ENCODE measurements at regions of chrX and their contacts with region 1.

Region 1: GRCh38 chrX:40735325-40736169 is at the start of gene MED14:
- DNase-seq: peak; percentile 77
- ATAC-seq: peak; percentile 80
- H3K4me3 Mint-ChIP-seq: peak within 1 kb of the TSS; percentile 89
- H3K27ac Mint-ChIP-seq: peak within 1 kb of the TSS; percentile 95
- H3K4me1 Mint-ChIP-seq: peaks cover 49% of the 10 kb centered on the region
- H3K27me3 Mint-ChIP-seq: no peaks in the 10 kb centered on the region
- CTCF ChIP-seq: no peak
- total RNA-seq, gene MED14: 52.4 and 62.6 TPM in 2 replicates

Region 2: GRCh38 chrX:40539214-40540142 is 196.1 kb before region 1 on chrX:
- CTCF ChIA-PET with region 1: no interaction called
- POLR2A ChIA-PET with region 1: no interaction called
- intact Hi-C with region 1: loop called (anchors 1 kb)
- DNase-seq: peak; percentile 19
- ATAC-seq: peak; percentile 77
- H3K4me3 Mint-ChIP-seq: peak overlapping the region; percentile 41
- H3K27ac Mint-ChIP-seq: no peak overlapping the region
- H3K4me1 Mint-ChIP-seq: peaks cover 16% of the 10 kb centered on the region
- H3K27me3 Mint-ChIP-seq: no peaks in the 10 kb centered on the region
- CTCF ChIP-seq: no peak

Region 3: GRCh38 chrX:40570346-40571093 is 165.0 kb before region 1 on chrX:
- CTCF ChIA-PET with region 1: no interaction called
- POLR2A ChIA-PET with region 1: no interaction called
- intact Hi-C with region 1: no loop called
- DNase-seq: peak; percentile 15
- ATAC-seq: peak; percentile 62
- H3K4me3 Mint-ChIP-seq: peak overlapping the region; percentile 79
- H3K27ac Mint-ChIP-seq: peak overlapping the region; percentile 77
- H3K4me1 Mint-ChIP-seq: peaks cover 19% of the 10 kb centered on the region
- H3K27me3 Mint-ChIP-seq: no peaks in the 10 kb centered on the region
- CTCF ChIP-seq: no peak

Region 4: GRCh38 chrX:40647307-40648197 is 88.0 kb before region 1 on chrX and contains the start of gene CXorf38:
- CTCF ChIA-PET with region 1: interaction called, 3 read pairs
- POLR2A ChIA-PET with region 1: interaction called, 16 read pairs
- intact Hi-C with region 1: loop called (anchors 1 kb)
- DNase-seq: peak; percentile 83
- ATAC-seq: peak; percentile 67
- H3K4me3 Mint-ChIP-seq: peak within 1 kb of the TSS; percentile 94
- H3K27ac Mint-ChIP-seq: peak within 1 kb of the TSS; percentile 93
- H3K4me1 Mint-ChIP-seq: peaks cover 39% of the 10 kb centered on the region
- H3K27me3 Mint-ChIP-seq: no peaks in the 10 kb centered on the region
- CTCF ChIP-seq: no peak
- total RNA-seq, gene CXorf38: 20.9 and 21.9 TPM in 2 replicates

Region 5: DNA sequence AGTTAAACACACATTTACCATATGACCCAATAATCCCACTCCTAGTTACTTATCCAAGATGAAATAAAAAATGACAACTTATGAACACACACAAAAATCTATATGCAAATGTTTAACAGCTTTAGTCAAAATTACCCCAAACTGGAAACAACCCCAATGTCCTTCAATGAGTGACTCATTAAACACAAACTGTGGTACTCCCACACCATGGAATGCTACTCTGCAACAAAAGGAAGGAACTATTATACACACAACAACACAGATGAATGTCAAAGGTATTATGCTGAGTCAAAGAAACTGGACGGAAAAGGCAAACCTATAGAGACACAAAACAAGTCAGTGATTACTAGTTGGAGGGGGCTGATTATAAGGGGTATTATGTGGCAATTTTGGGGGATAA is 40.7 kb before region 1 on chrX:
- CTCF ChIA-PET with region 1: no interaction called
- POLR2A ChIA-PET with region 1: no interaction called
- intact Hi-C with region 1: loop called (anchors 5 kb)
- DNase-seq: no peak
- ATAC-seq: no peak
- H3K4me3 Mint-ChIP-seq: no peak overlapping the region
- H3K27ac Mint-ChIP-seq: no peak overlapping the region
- H3K4me1 Mint-ChIP-seq: no peaks in the 10 kb centered on the region
- H3K27me3 Mint-ChIP-seq: no peaks in the 10 kb centered on the region
- CTCF ChIP-seq: no peak

Region 6: GRCh38 chrX:40792433-40792832 is 56.9 kb after region 1 on chrX:
- CTCF ChIA-PET with region 1: interaction called, 7 read pairs
- POLR2A ChIA-PET with region 1: interaction called, 5 read pairs
- intact Hi-C with region 1: loop called (anchors 1 kb)
- DNase-seq: no peak
- ATAC-seq: no peak
- H3K4me3 Mint-ChIP-seq: no peak overlapping the region
- H3K27ac Mint-ChIP-seq: no peak overlapping the region
- H3K4me1 Mint-ChIP-seq: peaks cover 1% of the 10 kb centered on the region
- H3K27me3 Mint-ChIP-seq: peaks cover 3% of the 10 kb centered on the region
- CTCF ChIP-seq: no peak

Region 7: DNA sequence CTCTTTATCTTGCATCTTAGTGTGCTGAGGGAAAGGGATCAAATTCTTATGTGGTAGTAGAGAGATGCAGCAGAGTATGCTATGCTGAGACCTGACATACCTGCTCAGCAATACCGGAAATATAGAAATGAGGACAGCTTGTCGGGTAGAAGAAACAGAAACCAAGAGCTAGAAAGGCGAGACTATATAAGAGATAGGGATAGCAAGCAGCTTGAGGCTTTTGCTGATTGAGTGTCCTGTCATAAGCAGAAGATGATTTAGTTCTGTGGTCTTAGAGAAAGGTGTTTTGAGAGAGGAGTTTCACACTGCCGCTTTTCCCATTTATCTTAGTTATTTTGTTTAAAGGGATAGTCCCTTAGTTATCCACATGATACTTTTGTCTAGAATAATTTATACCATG is 381.4 kb after region 1 on chrX:
- CTCF ChIA-PET with region 1: no interaction called
- POLR2A ChIA-PET with region 1: no interaction called
- intact Hi-C with region 1: loop called (anchors 5 kb)
- DNase-seq: no peak
- ATAC-seq: peak; percentile 58
- H3K4me3 Mint-ChIP-seq: peak overlapping the region; percentile 40
- H3K27ac Mint-ChIP-seq: peak overlapping the region; percentile 79
- H3K4me1 Mint-ChIP-seq: peaks cover 71% of the 10 kb centered on the region
- H3K27me3 Mint-ChIP-seq: no peaks in the 10 kb centered on the region
- CTCF ChIP-seq: no peak